OCI-LY7 (cell line): ENCODE measurements at regions of chr22 and their contacts with region 1.

Region 1: GRCh38 chr22:25334162-25334490 is 114.7 kb downstream of the CRYBB2 start:
- DNase-seq: peak; percentile 65
- H3K4me3 ChIP-seq: no peak overlapping the region
- H3K27ac ChIP-seq: no peak overlapping the region
- H3K4me1 ChIP-seq: no peaks in the 10 kb centered on the region
- CTCF ChIP-seq: peak; percentile 76

Region 2: DNA sequence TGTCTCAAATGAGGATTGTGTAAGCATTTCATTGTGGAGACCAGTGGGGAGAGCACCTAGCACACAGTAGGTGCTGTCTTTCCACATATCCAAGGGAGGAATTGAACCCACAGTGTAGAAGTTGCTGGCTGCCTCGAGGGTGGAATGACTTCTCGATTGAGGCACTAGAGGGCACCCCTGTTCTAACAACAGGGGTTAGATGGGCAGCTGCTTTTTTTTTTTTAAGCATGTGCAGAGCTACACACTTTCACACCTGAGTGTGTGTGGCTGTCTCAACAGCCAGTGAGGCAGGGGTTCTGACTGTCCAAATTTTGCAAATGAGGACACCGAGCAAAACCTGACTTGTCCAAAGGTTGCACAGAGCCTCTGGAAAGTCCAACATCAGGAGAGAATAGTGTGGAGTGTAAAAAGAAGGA is 252.7 kb before region 1 on chr22:
- CTCF ChIA-PET with region 1: no interaction called
- POLR2A ChIA-PET with region 1: no interaction called
- intact Hi-C with region 1: loop called (anchors 10 kb)
- DNase-seq: peak; percentile 47
- H3K4me3 ChIP-seq: no peak overlapping the region
- H3K27ac ChIP-seq: no peak overlapping the region
- H3K4me1 ChIP-seq: peaks cover 4% of the 10 kb centered on the region
- CTCF ChIP-seq: peak; percentile 78

Region 3: GRCh38 chr22:25202290-25202921 is 131.7 kb before region 1 on chr22:
- CTCF ChIA-PET with region 1: no interaction called
- POLR2A ChIA-PET with region 1: interaction called, 3 read pairs
- intact Hi-C with region 1: loop called (anchors 1 kb)
- DNase-seq: peak; percentile 56
- H3K4me3 ChIP-seq: no peak overlapping the region
- H3K27ac ChIP-seq: no peak overlapping the region
- H3K4me1 ChIP-seq: no peaks in the 10 kb centered on the region
- CTCF ChIP-seq: peak; percentile 92

Region 4: DNA sequence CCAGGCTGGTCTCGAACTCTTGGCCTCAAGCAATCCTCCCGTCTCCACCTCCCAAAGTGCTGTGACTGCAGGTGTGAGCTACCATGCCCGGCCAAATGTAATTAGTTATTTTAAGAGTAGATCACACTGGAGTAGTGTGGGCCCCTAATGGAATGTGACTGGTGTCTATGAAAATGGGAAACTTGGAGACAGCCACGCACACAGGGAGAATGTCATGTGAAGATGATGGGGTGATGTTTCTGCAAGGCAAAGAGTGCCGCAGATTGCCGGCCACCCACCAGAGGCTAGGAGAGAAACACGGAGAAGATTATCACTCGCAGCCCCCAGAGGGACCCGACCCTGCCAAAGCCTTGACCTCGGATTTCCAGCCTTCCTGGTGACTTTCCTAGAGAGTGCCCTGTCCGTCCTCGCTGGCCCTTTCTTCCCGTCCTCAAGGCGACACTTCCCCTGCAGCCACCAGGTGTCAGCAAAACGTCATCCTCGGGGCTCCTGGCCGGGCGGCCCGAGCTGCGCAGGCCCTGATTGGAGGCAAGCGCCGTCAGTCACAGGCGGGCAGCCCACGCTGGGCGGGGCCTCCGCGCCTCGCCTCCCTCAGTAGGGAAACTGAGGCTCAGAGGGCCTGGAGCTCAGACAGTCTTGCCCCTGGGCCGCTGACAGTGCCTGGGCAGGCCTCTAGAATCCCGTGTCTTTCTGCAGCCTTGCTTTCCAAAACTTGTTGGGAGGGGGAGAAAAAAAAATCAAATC is 98.4 kb before region 1 on chr22:
- CTCF ChIA-PET with region 1: no interaction called
- POLR2A ChIA-PET with region 1: no interaction called
- intact Hi-C with region 1: loop called (anchors 1 kb)
- DNase-seq: peak; percentile 79
- H3K4me3 ChIP-seq: no peak overlapping the region
- H3K27ac ChIP-seq: no peak overlapping the region
- H3K4me1 ChIP-seq: no peaks in the 10 kb centered on the region
- CTCF ChIP-seq: peak; percentile 83

Region 5: DNA sequence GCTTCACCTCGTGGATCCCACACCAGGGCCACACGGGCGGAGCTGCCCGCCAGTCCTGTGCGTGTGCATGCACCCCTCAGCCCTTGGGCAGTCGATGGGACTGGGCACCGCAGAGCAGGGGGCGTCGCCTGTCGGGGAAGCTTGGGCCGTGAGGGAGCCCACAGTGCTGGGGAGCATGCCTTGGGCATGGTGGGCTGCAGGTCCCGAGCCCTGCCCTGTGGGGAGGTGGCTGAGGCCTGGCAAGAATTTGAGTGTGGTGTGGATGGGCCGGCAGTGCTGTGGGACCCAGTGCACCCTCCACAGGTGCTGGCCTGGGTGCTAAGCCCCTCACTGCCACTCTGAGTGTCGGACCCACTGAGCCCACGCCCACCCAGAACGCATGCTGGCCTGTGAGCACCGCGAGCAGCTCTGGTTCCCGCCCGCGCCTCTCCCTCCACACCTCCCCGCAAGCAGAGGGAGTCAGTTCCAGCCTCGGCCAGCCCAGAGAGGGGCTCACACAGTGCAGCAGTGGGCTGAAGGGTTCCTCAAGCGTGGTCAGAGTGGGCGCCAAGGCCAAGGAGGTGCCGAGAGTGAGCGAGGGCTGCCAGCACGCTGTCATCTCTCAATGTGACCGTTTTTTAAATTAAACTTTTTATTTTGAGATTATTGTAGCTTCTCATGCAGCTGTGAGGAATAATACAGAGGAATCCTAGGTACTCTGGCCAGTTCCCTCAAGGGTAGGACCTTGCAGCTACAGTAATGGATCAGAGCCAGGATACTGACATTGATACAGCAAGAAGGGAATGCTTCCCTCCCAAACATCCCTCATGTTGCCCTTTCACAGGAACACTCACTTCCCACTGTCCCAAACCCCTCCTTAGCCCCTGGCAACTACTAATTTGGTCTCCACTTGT is 13.0 kb after region 1 on chr22:
- CTCF ChIA-PET with region 1: no interaction called
- POLR2A ChIA-PET with region 1: no interaction called
- intact Hi-C with region 1: no loop called
- DNase-seq: no peak
- H3K4me3 ChIP-seq: no peak overlapping the region
- H3K27ac ChIP-seq: no peak overlapping the region
- H3K4me1 ChIP-seq: no peaks in the 10 kb centered on the region
- CTCF ChIP-seq: no peak